Prostate gland (tissue), 2 donors: ENCODE measurements at regions of chr11 and their contacts with region 1.

Region 1: DNA sequence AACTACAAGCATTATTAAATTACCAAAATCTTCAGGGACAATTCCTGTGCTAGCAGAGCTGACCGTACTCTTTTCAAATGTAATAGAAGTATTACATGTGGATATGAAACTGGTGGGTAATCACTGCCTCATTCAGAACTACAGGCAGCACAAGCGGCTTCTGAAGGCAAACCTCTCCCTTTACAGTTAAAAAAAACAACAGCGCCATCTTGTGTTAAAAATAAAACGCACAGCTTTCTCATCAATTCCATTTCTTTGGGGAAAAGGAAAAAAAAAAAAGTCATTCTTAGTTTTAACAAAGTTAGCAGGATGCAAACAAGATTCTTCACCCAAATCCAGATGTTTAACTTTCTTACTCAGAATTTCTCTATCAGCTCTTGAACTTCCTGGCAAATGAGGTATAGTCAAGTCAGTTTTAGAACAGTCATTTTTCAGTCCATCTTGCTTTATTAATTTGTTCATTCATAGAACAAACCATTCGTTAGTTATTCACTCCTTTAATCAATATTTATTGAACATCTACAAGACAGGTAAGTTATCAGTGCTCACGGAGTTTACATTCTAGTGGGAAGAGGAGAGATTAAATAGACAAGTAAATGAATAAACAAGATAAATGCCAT is 331.8 kb upstream of the MPPED2 start:
- DNase-seq: peak; percentile 12
- H3K4me3 ChIP-seq: no peak overlapping the region
- H3K27ac ChIP-seq: no peak overlapping the region
- H3K4me1 ChIP-seq: no peaks in the 10 kb centered on the region
- H3K27me3 ChIP-seq: no peaks in the 10 kb centered on the region
- CTCF ChIP-seq: peak; percentile 49 to 73 (median 69)
- POLR2A ChIP-seq: no peak

Region 2: GRCh38 chr11:30128269-30128932 is 789.6 kb before region 1 on chr11:
- intact Hi-C with region 1: loop called (anchors 10 kb)
- DNase-seq: peak; percentile 11
- H3K4me3 ChIP-seq: no peak overlapping the region
- H3K27ac ChIP-seq: no peak overlapping the region
- H3K4me1 ChIP-seq: no peaks in the 10 kb centered on the region
- H3K27me3 ChIP-seq: no peaks in the 10 kb centered on the region
- CTCF ChIP-seq: peak in 3 of 4 experiments; percentile 42 to 54 (median 43)
- POLR2A ChIP-seq: no peak

Region 3: DNA sequence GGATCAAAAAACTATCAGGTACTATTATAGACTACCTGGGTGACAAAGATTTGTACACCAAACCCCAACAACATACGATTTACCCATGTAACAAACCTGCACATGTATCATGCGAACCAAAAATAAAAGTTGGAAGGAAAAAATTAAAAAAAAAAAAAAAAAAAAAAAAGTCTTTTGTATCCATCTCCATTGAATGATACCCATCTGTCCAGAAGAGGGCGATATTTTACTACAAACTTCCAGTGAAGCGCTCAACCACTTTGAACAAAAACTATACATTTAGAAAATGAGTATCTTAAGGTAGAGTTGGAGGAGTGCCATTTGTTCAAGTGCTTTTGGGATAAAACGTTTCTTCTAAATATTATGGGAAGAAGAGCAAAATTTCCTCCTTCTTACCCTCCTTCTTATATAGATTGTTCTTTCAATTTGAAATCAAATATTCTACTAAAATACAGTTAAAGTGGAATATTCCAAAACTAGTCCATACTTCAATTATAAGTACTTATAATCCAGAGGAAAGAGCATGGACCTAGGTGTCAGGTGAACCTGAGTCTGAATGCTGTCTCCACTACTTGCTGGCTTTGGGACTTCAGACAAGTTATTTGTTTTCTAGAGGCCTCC is 571.8 kb before region 1 on chr11:
- intact Hi-C with region 1: loop called (anchors 5 kb)
- DNase-seq: peak; percentile 47
- H3K4me3 ChIP-seq: no peak overlapping the region
- H3K27ac ChIP-seq: peak overlapping the region; percentile 10 to 18
- H3K4me1 ChIP-seq: no peaks in the 10 kb centered on the region
- H3K27me3 ChIP-seq: no peaks in the 10 kb centered on the region
- CTCF ChIP-seq: peak in 3 of 4 experiments; percentile 53 to 81 (median 62)
- POLR2A ChIP-seq: no peak

Region 4: DNA sequence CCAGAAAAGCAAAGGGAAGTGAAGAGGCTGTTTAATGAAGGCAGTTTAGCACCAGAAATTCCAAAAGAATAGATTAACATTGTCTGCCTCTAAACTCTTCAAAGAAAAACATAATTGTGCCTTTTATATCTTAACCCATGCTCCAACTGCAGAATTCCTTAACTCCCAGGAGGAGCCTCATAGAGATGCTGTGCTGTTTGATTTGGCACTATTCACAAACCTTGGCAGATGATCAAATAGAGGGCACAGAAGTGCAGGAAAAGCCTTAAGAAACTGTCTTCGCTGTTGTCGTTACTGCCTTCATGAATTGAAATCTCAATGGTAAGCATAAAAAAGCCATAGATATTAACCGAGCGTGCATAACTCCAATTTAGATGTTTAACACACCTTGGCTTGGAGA is 207.7 kb before region 1 on chr11:
- intact Hi-C with region 1: no loop called
- DNase-seq: peak; percentile 8
- H3K4me3 ChIP-seq: no peak overlapping the region
- H3K27ac ChIP-seq: no peak overlapping the region
- H3K4me1 ChIP-seq: no peaks in the 10 kb centered on the region
- H3K27me3 ChIP-seq: no peaks in the 10 kb centered on the region
- CTCF ChIP-seq: no peak
- POLR2A ChIP-seq: no peak